ENCODE measurements at regions of chr11 and their contacts with region 1.

Region 1: DNA sequence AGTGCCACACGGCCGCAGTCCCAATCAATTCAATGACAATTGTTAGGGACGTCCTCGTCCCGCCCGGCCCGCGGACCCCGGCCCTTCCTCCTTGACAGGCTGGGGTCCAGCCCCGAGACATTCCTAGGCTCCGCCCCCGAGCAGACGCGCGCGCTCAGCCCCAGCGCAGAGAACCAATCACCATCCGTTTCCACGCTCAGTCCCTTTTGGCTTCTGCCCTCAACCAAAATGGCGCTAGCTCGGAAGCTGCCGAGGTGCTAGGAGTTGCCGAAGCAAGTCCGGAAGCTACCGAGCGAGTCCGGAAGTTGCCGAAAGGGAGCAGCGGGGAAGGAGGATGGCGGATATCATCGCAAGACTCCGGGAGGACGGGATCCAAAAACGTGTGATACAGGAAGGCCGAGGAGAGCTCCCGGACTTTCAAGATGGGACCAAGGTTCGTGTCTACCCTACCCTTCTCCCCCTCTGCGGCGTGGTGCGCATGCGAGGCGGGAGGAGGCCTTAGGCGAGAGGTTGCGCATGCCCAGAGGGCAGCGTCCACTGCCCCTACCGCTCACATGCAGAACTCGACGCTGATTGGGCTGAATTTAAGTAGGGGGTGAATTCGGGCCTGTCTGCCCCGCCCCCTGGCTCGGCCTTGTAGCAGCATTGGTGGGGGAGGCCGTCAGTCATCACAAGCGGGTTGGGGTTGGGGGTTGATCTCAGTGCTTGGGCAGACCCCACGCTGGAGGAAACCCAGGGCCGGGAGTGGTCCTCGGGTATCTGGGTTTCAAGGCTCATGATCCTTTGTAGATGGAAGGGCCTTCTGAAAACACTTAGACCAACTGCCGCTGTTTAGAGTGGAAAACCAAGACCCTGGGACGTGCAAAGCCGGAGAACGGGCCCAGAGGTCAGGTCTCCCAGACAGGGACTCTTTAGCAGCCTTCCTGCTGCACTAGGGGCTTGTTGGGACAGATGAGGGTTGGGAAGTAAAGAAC is at the start of gene AIP:
- DNase-seq: peak; percentile 99
- H3K4me3 Mint-ChIP-seq: peak within 1 kb of the TSS; percentile 90
- H3K27ac Mint-ChIP-seq: peak within 1 kb of the TSS; percentile 99
- H3K4me1 Mint-ChIP-seq: peaks cover 42% of the 10 kb centered on the region
- H3K27me3 Mint-ChIP-seq: no peaks in the 10 kb centered on the region
- total RNA-seq, gene AIP: 160 to 169 TPM

Region 2: GRCh38 chr11:67118801-67119584 is 364.1 kb before region 1 on chr11 and contains the start of gene KDM2A:
- CTCF ChIA-PET with region 1: no interaction called
- POLR2A ChIA-PET with region 1: no interaction called
- intact Hi-C with region 1: loop called (anchors 10 kb)
- DNase-seq: peak; percentile 100
- H3K4me3 Mint-ChIP-seq: peak within 1 kb of the TSS; percentile 99
- H3K27ac Mint-ChIP-seq: peak within 1 kb of the TSS; percentile 93
- H3K4me1 Mint-ChIP-seq: peaks cover 21% of the 10 kb centered on the region
- H3K27me3 Mint-ChIP-seq: no peaks in the 10 kb centered on the region
- total RNA-seq, gene KDM2A: 65.1 to 69.6 TPM

Region 3: GRCh38 chr11:67239783-67240575 is 243.1 kb before region 1 on chr11:
- CTCF ChIA-PET with region 1: no interaction called
- POLR2A ChIA-PET with region 1: interaction called, 4 read pairs
- intact Hi-C with region 1: loop called (anchors 1 kb)
- DNase-seq: peak; percentile 99
- H3K4me3 Mint-ChIP-seq: peak overlapping the region; percentile 97
- H3K27ac Mint-ChIP-seq: peak overlapping the region; percentile 100
- H3K4me1 Mint-ChIP-seq: peaks cover 43% of the 10 kb centered on the region
- H3K27me3 Mint-ChIP-seq: no peaks in the 10 kb centered on the region

Region 4: DNA sequence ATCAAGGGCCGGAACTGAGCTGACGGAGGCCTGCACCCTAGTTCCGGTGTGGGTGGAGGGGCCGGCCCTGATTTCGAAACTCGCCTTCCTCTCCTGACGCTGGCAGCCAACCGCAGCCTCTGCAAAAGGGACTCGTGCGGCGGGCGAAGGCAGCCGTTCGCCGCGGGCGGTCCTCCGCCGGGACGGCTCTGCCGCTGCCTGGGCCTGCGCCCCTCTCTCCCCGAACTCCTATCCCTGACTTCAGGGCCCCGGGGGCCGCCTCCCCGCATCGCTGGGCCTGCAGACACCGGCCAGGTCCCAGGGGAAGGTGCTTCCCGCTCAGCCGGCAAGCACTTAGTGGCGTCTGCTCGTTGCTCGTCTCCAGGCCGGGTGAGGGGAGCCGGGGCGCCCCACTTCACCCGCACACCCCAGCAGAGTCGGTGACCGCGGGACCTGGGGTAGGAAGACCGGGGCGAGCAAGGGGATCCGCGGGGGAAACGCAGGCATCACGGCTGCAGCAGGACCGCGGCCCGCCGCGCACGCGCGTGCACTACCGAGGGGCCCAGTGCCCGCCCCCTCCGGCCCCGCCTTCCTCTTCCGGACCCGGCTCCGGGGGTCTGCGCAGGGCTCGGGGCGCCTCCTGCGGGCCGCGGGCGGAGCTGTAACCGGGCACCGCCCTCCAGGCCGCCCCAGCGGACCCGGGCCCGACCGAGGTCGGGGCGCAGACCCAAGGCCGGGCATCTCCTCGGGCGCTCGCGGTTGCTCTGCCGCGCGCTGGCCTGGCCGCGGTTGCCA is 194.5 kb before region 1 on chr11:
- CTCF ChIA-PET with region 1: no interaction called
- POLR2A ChIA-PET with region 1: no interaction called
- intact Hi-C with region 1: loop called (anchors 5 kb)
- DNase-seq: peak; percentile 95
- H3K4me3 Mint-ChIP-seq: peak overlapping the region; percentile 66
- H3K27ac Mint-ChIP-seq: peak overlapping the region; percentile 97
- H3K4me1 Mint-ChIP-seq: peaks cover 62% of the 10 kb centered on the region
- H3K27me3 Mint-ChIP-seq: no peaks in the 10 kb centered on the region

Region 5: GRCh38 chr11:67439321-67439883 is 43.7 kb before region 1 on chr11:
- CTCF ChIA-PET with region 1: interaction called, 3 read pairs
- POLR2A ChIA-PET with region 1: interaction called, 67 read pairs
- intact Hi-C with region 1: loop called (anchors 2 kb)
- DNase-seq: peak; percentile 72
- H3K4me3 Mint-ChIP-seq: peak overlapping the region; percentile 85
- H3K27ac Mint-ChIP-seq: peak overlapping the region; percentile 95
- H3K4me1 Mint-ChIP-seq: peaks cover 51% of the 10 kb centered on the region
- H3K27me3 Mint-ChIP-seq: no peaks in the 10 kb centered on the region

Region 6: DNA sequence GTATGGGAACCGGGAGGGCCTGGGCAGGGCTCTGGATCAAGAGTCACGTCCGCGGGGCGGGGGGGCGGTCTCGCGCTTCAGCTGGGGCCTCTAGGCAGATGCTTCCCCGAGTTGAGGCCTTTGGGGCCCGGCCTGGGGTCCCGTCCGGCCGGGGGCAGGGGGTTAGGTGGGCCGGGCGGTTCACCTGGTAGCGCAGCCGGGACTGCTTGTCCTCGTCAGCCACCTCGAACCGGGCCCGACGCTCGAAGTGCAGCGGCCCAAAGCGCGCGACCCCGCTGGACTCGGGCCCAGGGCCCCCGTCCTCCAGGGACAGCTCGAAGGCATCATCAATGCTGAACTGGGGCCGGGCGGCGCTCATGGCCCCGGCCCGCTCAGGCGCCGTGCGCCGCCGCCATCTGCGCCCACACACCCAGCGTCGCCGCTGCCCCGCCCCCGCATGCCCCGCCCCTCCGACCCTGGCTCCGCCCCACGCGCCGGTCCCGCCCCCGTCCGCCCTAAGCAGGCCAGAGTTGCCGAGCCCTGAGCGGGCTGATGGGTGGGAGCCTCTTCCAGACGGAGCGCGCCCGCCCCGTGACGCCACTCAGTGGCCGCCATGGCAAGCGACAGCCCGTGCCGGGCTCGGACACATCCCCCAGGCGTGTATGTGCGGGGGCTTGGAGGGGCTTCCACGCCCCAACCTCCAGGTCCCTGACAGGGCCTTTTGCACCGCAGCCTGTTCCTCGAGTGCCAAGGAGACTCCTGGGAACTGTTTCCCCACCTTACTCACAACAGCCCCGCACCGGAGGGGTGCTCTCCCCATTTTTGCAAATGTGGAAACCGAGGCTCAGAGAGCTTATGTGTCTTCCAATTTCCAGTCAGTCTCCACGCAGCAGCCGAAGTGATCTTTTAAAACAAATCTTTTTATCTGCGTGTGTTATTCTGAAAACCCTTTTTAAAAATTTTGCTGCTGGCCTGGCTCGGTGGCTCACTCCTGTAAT is 14.0 kb before region 1 on chr11 and contains the start of gene TMEM134:
- CTCF ChIA-PET with region 1: interaction called, 13 read pairs
- POLR2A ChIA-PET with region 1: interaction called, 35 read pairs
- intact Hi-C with region 1: loop called (anchors 1 kb)
- DNase-seq: peak; percentile 95
- H3K4me3 Mint-ChIP-seq: peak within 1 kb of the TSS; percentile 90
- H3K27ac Mint-ChIP-seq: peak within 1 kb of the TSS; percentile 90
- H3K4me1 Mint-ChIP-seq: peaks cover 30% of the 10 kb centered on the region
- H3K27me3 Mint-ChIP-seq: no peaks in the 10 kb centered on the region
- total RNA-seq, gene TMEM134: 68.2 to 75.2 TPM

Measured in activated CD4-positive, alpha-beta memory T cell treated with anti-CD3 and anti-CD28 coated beads for 36 hours (primary cell).